Activated T-helper 1 cell treated with anti-CD3 and anti-CD28 coated beads, Interleukin-12 subunit alpha, Interleukin-12 subunit beta, Interleukin-2, Interleukin-4 antibody, amounts not matched to agents 30 ng/mL and 10 ng/mL and 1 ng/mL, durations not matched to agents 14 hours and 24 hours and 36 hours (primary cell): ENCODE measurements at regions of chr15 and their contacts with region 1.

Region 1: DNA sequence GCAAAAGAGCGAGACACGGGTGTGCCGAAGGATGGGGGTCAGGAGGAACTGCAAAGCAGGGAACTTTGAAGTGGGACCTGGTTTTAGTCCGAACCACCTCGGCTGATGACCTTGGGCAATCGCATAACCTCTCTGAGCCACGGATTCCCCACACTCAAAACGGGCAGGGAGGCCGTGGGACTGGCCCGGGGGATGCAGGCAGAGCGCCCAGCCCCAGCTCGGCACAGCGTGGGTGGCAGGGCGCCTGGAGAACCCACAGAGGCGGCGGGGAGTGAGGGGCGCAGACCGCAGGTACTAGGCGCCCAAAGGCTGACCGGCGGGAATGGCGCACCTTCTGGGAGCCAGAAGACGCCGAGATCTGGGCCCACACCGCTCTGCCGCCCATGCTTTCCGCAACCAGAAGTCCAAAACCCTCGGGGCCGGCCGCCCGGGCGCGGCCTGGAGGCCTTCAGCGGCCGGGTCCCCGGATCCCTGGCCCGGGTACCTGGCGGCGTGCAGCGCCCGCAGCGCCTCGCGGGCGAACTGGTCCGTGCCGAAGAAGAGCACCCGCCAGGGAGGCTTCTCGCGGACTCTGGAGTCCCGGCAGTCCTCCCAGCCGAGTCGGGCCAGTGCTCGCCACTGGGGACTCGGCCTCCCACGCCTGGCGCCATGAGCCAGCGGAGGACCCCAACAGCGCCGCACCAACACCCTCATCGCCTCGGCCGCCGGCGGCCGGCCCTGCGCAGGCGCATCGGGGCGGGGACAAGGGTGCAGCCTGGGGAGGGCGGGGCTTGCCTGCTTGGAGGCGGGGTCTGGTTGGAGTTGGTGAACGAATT is at the start of gene MTFMT:
- DNase-seq: peak; percentile 83
- H3K4me3 Mint-ChIP-seq: peak within 1 kb of the TSS; percentile 89
- H3K27ac Mint-ChIP-seq: peak within 1 kb of the TSS; percentile 78
- H3K4me1 Mint-ChIP-seq: peaks cover 23% of the 10 kb centered on the region
- H3K27me3 Mint-ChIP-seq: peaks cover 16% of the 10 kb centered on the region
- total RNA-seq, gene MTFMT: 18.8 and 21.1 TPM in 2 replicates

Region 2: DNA sequence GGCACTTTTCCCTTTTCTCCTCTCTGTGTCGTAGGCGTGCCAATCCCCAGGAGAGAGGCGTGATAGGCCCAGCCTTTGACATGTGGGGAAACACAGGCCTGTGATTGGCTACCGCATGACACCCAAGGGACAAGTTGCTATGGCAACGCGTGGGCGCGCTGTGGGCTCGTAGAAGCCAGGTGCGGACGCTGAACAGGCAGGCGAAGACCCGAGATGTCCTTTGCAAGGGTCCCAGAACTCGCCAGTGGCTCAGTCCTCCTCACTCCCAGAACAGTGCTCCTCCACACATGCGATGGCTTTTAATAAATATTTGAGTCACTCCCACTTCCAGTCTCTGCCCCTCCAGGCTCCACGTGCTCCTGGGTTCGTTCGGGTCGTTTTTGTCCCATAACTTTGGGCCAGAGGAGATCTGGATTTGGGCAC is 20.3 kb after region 1 on chr15:
- intact Hi-C with region 1: loop called (anchors 2 kb)
- DNase-seq: peak; percentile 84
- H3K4me3 Mint-ChIP-seq: peak overlapping the region; percentile 57
- H3K27ac Mint-ChIP-seq: peak overlapping the region; percentile 36
- H3K4me1 Mint-ChIP-seq: peaks cover 15% of the 10 kb centered on the region
- H3K27me3 Mint-ChIP-seq: peaks cover 2% of the 10 kb centered on the region

Region 3: GRCh38 chr15:65133548-65134200 is 104.5 kb after region 1 on chr15 and contains the start of gene PDCD7:
- intact Hi-C with region 1: loop called (anchors 2 kb)
- DNase-seq: peak; percentile 80
- H3K4me3 Mint-ChIP-seq: peak within 1 kb of the TSS; percentile 92
- H3K27ac Mint-ChIP-seq: peak within 1 kb of the TSS; percentile 93
- H3K4me1 Mint-ChIP-seq: peaks cover 31% of the 10 kb centered on the region
- H3K27me3 Mint-ChIP-seq: peaks cover 2% of the 10 kb centered on the region
- total RNA-seq, gene PDCD7: 51.2 and 54.7 TPM in 2 replicates

Region 4: GRCh38 chr15:65171429-65171828 is 142.3 kb after region 1 on chr15:
- intact Hi-C with region 1: no loop called
- DNase-seq: no peak
- H3K4me3 Mint-ChIP-seq: no peak overlapping the region
- H3K27ac Mint-ChIP-seq: no peak overlapping the region
- H3K4me1 Mint-ChIP-seq: no peaks in the 10 kb centered on the region
- H3K27me3 Mint-ChIP-seq: no peaks in the 10 kb centered on the region

Region 5: DNA sequence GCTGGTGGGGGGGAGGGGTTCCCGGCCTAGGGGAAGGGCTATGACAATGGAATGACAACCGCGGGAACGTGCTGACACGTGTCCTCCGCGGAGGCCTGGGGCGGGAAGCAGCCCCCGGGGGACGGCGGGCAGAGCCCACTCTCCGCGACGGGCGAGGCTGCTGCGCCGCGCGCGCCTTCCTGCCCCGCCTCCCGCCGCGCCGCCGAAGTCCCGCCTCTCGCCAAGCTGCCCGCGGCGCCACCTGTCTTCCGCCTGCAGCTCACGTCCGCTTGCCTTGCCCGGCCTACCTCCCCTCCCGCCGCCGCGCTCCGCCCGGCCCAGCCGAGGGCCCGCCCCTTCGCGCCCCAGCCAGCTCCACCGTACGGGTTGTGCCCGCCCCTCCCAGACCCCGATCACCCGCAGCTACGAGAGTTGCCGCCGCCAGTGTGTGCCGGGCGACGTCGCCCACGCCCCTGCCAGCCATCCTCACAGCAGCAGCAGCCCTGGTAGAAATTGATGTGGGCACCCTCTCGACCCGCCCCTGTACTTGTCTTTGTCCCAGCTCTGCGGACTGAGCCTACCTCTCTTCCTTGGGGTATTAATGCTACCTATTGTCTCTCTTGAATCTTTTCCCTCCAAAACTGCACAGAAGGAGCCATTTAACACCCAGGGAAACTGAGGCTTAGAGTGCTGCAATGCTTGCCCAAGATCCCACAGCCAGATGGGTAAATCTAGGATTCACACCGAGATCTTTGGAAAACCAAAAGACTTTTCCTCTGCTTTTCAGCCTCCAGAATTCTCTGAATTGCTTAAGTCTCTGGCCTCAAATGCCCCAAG is 257.8 kb after region 1 on chr15 and contains the start of gene PARP16:
- intact Hi-C with region 1: loop called (anchors 2 kb)
- DNase-seq: peak; percentile 90
- H3K4me3 Mint-ChIP-seq: peak within 1 kb of the TSS; percentile 86
- H3K27ac Mint-ChIP-seq: peak within 1 kb of the TSS; percentile 76
- H3K4me1 Mint-ChIP-seq: peaks cover 27% of the 10 kb centered on the region
- H3K27me3 Mint-ChIP-seq: no peaks in the 10 kb centered on the region
- total RNA-seq, gene PARP16: 12.4 and 14.0 TPM in 2 replicates